PC-3 (cell line): ENCODE measurements at regions of chr7 and their contacts with region 1.

Region 1: DNA sequence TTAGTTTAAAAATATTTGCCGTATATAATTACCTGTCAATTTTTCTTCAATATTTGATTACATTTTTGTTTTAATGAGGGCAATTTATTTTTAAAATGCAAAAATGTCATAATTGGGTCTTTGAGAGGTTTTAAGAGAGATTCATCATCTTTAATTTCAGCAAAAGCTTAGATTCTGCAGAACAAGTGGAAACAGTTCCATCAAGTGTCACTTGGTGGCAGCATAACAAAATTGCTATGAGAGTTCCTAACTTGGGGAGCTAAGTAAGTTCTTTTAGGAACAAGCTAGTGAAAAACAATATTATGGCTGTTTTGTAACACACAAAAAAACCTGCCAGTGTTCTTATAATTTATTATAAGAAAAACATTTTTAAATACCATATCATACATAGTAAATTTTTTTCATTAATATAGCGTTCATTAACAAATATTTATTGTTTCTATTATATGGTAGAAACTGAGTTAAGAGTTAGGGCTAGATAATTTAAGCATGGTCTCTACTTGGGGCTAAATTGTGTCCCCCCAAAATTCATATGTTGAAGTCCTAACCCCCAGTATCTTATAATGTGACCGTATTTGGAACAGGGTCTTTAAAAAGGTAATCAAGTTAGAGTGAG is 155.2 kb downstream of the MAGI2 start:
- DNase-seq: peak; percentile 77
- ATAC-seq: no peak
- H3K4me3 ChIP-seq: no peak overlapping the region
- H3K27ac ChIP-seq: no peak overlapping the region
- H3K4me1 ChIP-seq: peaks cover 14% of the 10 kb centered on the region
- H3K27me3 ChIP-seq: no peaks in the 10 kb centered on the region
- CTCF ChIP-seq: peak; percentile 73

Region 2: GRCh38 chr7:78265486-78265885 is 1032.8 kb before region 1 on chr7:
- CTCF ChIA-PET with region 1: no interaction called
- POLR2A ChIA-PET with region 1: no interaction called
- intact Hi-C with region 1: no loop called
- DNase-seq: no peak
- ATAC-seq: no peak
- H3K4me3 ChIP-seq: no peak overlapping the region
- H3K27ac ChIP-seq: no peak overlapping the region
- H3K4me1 ChIP-seq: no peaks in the 10 kb centered on the region
- H3K27me3 ChIP-seq: peaks cover 13% of the 10 kb centered on the region; the same call in 1 of the 2 replicates
- CTCF ChIP-seq: no peak

Region 3: DNA sequence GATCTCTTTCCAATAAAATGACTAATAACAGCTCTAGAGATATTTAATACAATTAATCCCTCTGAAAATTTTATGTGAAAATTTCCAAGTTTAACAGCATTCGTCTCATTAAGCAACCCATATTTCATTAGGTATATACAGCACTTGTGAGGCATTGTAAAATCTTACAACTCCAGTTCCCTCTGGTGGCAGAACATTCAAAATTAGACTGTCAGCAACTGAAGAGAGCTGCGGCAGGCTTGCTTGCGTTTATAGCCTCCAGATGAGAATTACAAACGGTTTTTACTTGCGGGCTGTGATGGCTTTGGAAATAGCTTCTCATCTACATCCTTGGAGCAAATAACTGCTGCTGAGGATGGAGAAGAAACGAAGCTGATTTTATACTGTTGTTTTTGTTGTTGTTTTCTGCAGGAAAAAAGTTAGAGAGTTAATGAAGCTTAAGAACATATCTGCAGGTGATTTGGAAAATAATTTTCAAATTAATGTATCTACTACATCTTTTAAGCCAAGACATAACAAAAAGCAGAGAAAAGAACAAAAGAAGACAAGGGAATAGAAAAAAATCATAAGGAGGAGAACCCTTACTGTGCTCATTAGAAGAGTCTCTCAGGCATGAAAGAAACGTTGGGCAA is 16.1 kb before region 1 on chr7:
- CTCF ChIA-PET with region 1: interaction called, 15 read pairs
- POLR2A ChIA-PET with region 1: no interaction called
- intact Hi-C with region 1: loop called (anchors 1 kb)
- DNase-seq: peak; percentile 71
- ATAC-seq: peak; percentile 70
- H3K4me3 ChIP-seq: peak overlapping the region; percentile 10
- H3K27ac ChIP-seq: peak overlapping the region; percentile 67
- H3K4me1 ChIP-seq: peaks cover 45% of the 10 kb centered on the region
- H3K27me3 ChIP-seq: no peaks in the 10 kb centered on the region
- CTCF ChIP-seq: peak; percentile 62

Region 4: GRCh38 chr7:79434098-79434497 is 135.8 kb after region 1 on chr7:
- CTCF ChIA-PET with region 1: no interaction called
- POLR2A ChIA-PET with region 1: no interaction called
- intact Hi-C with region 1: loop called (anchors 10 kb)
- DNase-seq: peak; percentile 70
- ATAC-seq: peak; percentile 53
- H3K4me3 ChIP-seq: no peak overlapping the region
- H3K27ac ChIP-seq: no peak overlapping the region
- H3K4me1 ChIP-seq: peaks cover 4% of the 10 kb centered on the region; the same call in 1 of the 2 replicates
- H3K27me3 ChIP-seq: no peaks in the 10 kb centered on the region
- CTCF ChIP-seq: no peak

Region 5: DNA sequence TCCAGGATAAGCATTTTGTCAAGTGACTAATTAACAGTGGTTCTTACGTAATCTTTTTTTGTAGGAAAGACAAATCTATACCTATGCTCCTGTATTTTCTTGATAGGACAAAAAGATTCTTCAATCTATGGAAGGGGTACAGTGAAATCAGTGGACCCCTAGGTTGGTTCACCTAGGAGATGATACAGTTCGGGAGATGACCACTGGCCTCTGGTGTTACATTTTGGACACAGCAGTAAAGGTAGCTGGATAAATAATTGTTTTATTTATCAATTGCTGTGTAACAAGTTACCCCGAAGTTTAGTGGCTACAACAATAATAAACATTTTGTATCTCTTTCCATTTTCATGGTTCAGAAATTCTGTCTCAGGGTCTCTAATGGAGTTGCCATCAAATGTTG is 443.4 kb after region 1 on chr7:
- CTCF ChIA-PET with region 1: interaction called, 37 read pairs
- POLR2A ChIA-PET with region 1: no interaction called
- intact Hi-C with region 1: loop called (anchors 1 kb)
- DNase-seq: peak; percentile 42
- ATAC-seq: peak; percentile 74
- H3K4me3 ChIP-seq: no peak overlapping the region
- H3K27ac ChIP-seq: no peak overlapping the region
- H3K4me1 ChIP-seq: no peaks in the 10 kb centered on the region
- H3K27me3 ChIP-seq: no peaks in the 10 kb centered on the region
- CTCF ChIP-seq: peak; percentile 71

Region 6: DNA sequence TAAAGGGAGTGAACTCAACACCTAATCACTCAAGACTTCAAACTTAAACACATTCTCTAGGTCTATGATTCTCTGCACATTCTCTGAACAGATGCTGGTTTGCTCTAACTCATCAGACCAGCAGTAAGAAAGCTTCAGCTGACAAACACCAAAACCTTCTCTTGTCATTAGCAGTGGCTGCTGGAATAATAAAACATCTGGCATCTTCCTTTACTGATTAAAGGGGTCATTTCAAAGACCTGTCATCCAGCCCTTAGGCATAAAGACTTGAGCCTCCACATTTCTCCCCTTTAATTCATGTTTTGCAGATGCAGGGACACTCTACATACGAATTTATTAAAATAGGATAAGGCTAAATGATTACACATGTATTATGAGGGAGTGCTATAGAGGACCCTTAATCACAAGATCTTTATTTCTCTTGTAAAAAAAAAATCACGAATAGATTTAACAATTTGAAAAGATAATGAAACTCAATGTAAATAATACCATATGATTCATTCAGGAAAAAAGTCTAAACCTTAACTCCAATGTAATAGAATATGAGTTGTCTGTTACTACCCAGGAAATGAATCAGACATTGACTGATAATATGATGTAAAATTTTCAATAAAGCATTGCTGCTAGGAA is 684.0 kb after region 1 on chr7:
- CTCF ChIA-PET with region 1: no interaction called
- POLR2A ChIA-PET with region 1: no interaction called
- intact Hi-C with region 1: no loop called
- DNase-seq: peak; percentile 65
- ATAC-seq: peak; percentile 75
- H3K4me3 ChIP-seq: peak overlapping the region; percentile 34; the same call in 1 of the 2 replicates
- H3K27ac ChIP-seq: peak overlapping the region; percentile 86
- H3K4me1 ChIP-seq: peaks cover 52% of the 10 kb centered on the region
- H3K27me3 ChIP-seq: no peaks in the 10 kb centered on the region
- CTCF ChIP-seq: no peak